Naive thymus-derived CD4-positive, alpha-beta T cell (primary cell): ENCODE measurements at regions of chr1 and their contacts with region 1.

Region 1: DNA sequence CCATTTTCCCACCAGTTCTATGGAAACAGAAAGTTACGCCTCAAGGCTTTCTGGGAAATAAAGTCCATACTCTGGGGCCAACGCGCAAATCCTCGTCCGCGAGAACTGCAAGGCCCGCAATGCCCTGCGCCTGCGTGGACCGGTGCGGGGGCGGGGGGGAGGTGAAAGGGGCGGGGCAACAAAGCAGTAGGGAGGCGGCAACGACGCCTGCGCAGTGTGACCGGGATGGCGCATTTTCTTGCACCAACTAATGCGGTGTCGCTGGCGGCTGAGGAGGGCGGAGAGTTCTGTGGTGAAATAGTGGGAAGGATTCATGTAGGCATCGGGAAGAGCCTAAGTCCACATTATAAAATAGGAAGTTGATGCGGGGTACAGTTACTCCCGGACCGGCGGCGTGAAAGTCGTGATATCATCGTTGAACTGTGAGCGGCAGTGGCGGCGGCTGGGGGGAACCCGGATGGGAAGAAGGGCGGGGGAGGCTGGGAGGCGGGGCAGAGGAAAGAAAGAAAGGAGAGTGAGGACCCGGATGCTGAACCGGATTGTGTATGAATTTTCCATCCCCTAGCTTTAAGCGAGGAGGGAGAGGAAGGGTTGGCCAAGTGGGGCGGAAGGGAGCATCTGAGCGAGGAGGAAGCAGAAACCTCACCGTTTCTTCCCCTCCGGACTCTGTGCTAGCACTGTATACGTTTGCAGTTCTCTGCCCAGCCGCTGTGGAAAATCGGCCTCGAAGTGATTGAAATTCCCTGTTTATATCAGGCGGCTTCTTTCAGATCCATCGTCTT is at the start of gene GGPS1:
- DNase-seq: peak; percentile 95 to 99 (median 97)
- ATAC-seq: peak; percentile 87
- H3K4me3 ChIP-seq: peak within 1 kb of the TSS; percentile 82
- H3K4me3 Mint-ChIP-seq: no peak within 1 kb of the TSS
- H3K27ac ChIP-seq: peak within 1 kb of the TSS; percentile 100
- H3K27ac Mint-ChIP-seq: peak within 1 kb of the TSS in 2 of 9 donors; percentile 91 to 94
- H3K4me1 ChIP-seq: peaks cover 40 to 54% of the 10 kb centered on the region in 2 donors
- H3K4me1 Mint-ChIP-seq: peaks cover 23 to 42% (median 31%) of the 10 kb centered on the region in 7 donors
- H3K27me3 ChIP-seq: no peaks in the 10 kb centered on the region
- H3K27me3 Mint-ChIP-seq: no peaks in the 10 kb centered on the region
- total RNA-seq, gene GGPS1: 26.5 to 51.7 (median 30.2) TPM

Region 2: DNA sequence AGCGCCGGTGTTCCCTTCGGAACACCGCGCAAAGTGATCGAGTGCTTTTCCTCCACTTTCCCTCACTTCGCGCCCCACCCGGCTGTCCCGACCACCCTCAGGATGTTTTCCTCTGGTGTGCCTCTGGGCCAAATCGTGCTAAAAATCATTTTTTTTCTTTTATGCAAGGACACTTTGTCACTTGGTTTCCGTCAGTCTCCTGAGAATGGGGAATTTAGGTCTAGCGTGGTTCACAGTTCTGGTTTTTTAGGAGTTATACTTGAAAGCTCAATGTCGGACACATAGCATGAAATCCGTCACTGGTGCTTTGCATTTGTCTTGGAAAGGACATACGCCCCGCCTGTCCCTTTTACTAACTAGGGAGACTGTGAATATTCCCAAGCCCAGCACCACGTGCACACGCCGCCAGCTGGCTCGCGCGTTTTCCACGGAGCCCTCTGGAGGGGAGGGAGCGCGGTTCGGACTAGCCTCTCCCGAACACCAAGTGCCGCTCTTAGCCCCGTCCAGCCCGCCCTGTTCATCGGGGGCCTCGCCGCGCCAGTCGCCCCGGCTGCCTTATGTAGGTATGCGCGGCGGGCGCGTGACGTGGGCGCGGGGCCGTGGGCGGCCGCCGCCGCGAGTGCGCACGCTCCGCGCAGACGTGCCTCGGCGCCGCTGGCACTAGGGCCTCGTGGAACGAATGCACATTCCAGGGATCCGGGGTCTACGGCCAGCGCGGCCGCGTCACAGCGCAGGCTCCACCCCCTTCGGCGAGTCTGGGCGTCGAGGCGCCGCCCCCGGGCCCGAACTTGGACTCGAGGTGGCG is 718.0 kb before region 1 on chr1:
- CTCF ChIA-PET with region 1: no interaction called
- POLR2A ChIA-PET with region 1: interaction called, 3 read pairs
- intact Hi-C with region 1: loop called (anchors 1 kb)
- DNase-seq: peak; percentile 89 to 93 (median 91)
- ATAC-seq: peak; percentile 67
- H3K4me3 ChIP-seq: peak overlapping the region; percentile 89
- H3K4me3 Mint-ChIP-seq: peak overlapping the region; percentile 80 to 98 (median 90)
- H3K27ac ChIP-seq: peak overlapping the region; percentile 97
- H3K27ac Mint-ChIP-seq: peak overlapping the region; percentile 97 to 100 (median 99)
- H3K4me1 ChIP-seq: peaks cover 34 to 43% of the 10 kb centered on the region in 2 donors
- H3K4me1 Mint-ChIP-seq: peaks cover 45 to 62% (median 54%) of the 10 kb centered on the region in 7 donors
- H3K27me3 ChIP-seq: no peaks in the 10 kb centered on the region
- H3K27me3 Mint-ChIP-seq: peaks cover 0 to 6% (median 0%) of the 10 kb centered on the region in 5 donors

Region 3: DNA sequence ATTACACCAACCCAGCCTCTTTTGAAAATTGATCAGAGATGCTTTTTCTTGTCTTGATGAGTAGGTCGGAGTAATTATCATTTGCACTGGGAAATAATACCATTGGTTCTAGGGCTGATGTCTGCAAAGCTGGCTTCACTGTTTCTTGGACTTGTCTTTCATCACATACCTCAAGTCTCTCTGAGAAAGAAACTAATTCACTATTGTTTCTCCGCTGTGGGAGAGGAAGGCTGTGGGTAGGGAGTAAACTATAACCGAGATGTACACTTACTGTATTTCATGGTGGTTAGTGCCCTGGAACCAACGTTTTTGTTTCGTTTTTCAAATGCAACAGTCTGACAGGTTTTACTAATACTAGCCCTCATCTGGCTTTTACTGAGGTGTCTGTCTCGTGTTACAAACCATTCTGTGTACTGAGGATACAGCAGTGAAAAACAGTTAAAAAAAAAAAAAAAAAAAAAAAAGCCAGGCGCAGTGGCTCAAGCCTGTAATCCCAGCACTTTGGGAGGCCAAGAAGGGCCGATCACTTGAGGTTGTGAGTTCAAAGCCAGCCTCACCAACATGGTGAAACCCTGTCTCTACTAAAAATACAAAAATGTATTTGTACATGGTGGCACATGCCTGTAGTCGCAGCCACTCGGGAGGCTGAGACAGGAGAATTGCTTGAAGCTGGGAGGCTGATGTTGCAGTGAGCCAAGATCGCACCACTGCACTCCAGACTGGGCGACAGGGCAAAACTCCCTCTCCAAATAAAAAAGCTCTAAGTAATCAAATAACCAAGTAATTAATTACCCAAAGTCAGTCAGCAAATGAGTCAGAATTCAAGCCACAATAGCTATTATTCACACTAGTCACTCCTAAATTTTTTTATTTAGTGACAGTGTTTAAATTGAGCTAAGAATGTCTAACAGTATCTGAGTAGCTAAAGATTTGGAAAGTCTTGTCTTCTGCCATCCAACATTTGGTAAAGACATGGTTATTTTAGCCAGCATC is 223.2 kb before region 1 on chr1:
- CTCF ChIA-PET with region 1: interaction called, 3 read pairs
- POLR2A ChIA-PET with region 1: interaction called, 3 read pairs
- intact Hi-C with region 1: loop called (anchors 2 to 5 kb)
- DNase-seq: peak in 1 of 9 donors; percentile 21
- ATAC-seq: peak; percentile 29
- H3K4me3 ChIP-seq: peak overlapping the region; percentile 55
- H3K4me3 Mint-ChIP-seq: peak overlapping the region in 9 of 10 donors; percentile 15 to 85 (median 77)
- H3K27ac ChIP-seq: no peak overlapping the region
- H3K27ac Mint-ChIP-seq: peak overlapping the region in 2 of 9 donors; percentile 54 to 76
- H3K4me1 ChIP-seq: peaks cover 21 to 23% of the 10 kb centered on the region in 2 donors
- H3K4me1 Mint-ChIP-seq: peaks cover 20 to 47% (median 41%) of the 10 kb centered on the region in 7 donors
- H3K27me3 ChIP-seq: no peaks in the 10 kb centered on the region
- H3K27me3 Mint-ChIP-seq: peaks cover 0 to 5% (median 0%) of the 10 kb centered on the region in 5 donors

Region 4: GRCh38 chr1:235215453-235215852 is 113.1 kb before region 1 on chr1:
- CTCF ChIA-PET with region 1: no interaction called
- POLR2A ChIA-PET with region 1: no interaction called
- intact Hi-C with region 1: no loop called
- DNase-seq: no peak
- ATAC-seq: no peak
- H3K4me3 ChIP-seq: no peak overlapping the region
- H3K4me3 Mint-ChIP-seq: no peak overlapping the region
- H3K27ac ChIP-seq: no peak overlapping the region
- H3K27ac Mint-ChIP-seq: peak overlapping the region in 4 of 9 donors; percentile 47 to 76 (median 64)
- H3K4me1 ChIP-seq: no peaks in the 10 kb centered on the region
- H3K4me1 Mint-ChIP-seq: peaks cover 7 to 43% (median 17%) of the 10 kb centered on the region in 7 donors
- H3K27me3 ChIP-seq: no peaks in the 10 kb centered on the region
- H3K27me3 Mint-ChIP-seq: no peaks in the 10 kb centered on the region

Region 5: DNA sequence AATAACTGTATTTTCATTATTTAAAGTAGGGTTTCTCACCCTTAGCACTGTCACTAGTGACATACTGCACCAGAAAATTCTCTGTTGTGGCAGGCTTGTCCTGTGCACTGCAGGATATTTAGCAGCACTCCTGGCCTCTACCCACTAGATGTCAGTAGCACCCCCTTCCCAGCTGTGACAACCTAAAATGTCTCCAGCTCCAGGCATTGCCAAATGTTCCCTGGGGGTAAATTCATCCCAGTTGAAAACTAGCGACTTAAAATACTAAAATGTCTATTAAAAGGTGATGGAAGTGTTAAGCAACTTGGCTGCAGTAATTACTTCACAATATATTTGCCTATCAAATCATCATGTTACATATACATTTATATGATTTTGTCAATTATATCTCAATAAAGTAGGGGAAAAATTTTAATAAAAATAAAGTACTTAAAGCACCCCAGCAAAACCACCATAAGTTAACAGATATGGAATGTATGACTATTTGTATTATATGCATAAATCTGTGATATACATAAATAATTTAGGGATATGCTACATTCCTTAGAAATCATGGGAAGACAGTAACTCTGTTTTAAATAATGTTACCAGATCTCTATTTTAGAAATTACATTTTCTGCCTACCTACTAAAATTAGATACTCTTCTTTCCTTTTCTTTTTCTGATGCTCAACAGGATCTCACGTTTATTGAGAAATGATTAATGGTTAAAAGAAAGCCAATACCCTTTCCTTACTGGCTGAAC is 75.2 kb before region 1 on chr1:
- CTCF ChIA-PET with region 1: no interaction called
- POLR2A ChIA-PET with region 1: interaction called, 3 read pairs
- intact Hi-C with region 1: loop called (anchors 1 kb)
- DNase-seq: peak; percentile 27 to 70 (median 63)
- ATAC-seq: peak; percentile 96
- H3K4me3 ChIP-seq: no peak overlapping the region
- H3K4me3 Mint-ChIP-seq: no peak overlapping the region
- H3K27ac ChIP-seq: no peak overlapping the region
- H3K27ac Mint-ChIP-seq: peak overlapping the region in 5 of 9 donors; percentile 16 to 65 (median 23)
- H3K4me1 ChIP-seq: peaks cover 0 to 5% of the 10 kb centered on the region in 2 donors
- H3K4me1 Mint-ChIP-seq: peaks cover 13 to 51% (median 41%) of the 10 kb centered on the region in 7 donors
- H3K27me3 ChIP-seq: no peaks in the 10 kb centered on the region
- H3K27me3 Mint-ChIP-seq: no peaks in the 10 kb centered on the region

Region 6: GRCh38 chr1:235367000-235367908 is 38.7 kb after region 1 on chr1 and contains the start of gene TBCE:
- CTCF ChIA-PET with region 1: no interaction called
- POLR2A ChIA-PET with region 1: interaction called, 6 read pairs
- intact Hi-C with region 1: loop called (anchors 1 kb)
- DNase-seq: peak; percentile 61 to 89 (median 63)
- ATAC-seq: peak; percentile 99
- H3K4me3 ChIP-seq: peak within 1 kb of the TSS; percentile 90
- H3K4me3 Mint-ChIP-seq: peak within 1 kb of the TSS; percentile 91 to 99 (median 98)
- H3K27ac ChIP-seq: peak within 1 kb of the TSS; percentile 74
- H3K27ac Mint-ChIP-seq: peak within 1 kb of the TSS; percentile 86 to 97 (median 93)
- H3K4me1 ChIP-seq: peaks cover 0 to 11% of the 10 kb centered on the region in 2 donors
- H3K4me1 Mint-ChIP-seq: peaks cover 13 to 41% (median 38%) of the 10 kb centered on the region in 7 donors
- H3K27me3 ChIP-seq: no peaks in the 10 kb centered on the region
- H3K27me3 Mint-ChIP-seq: no peaks in the 10 kb centered on the region
- total RNA-seq, gene TBCE: 16.8 to 26.1 (median 20.6) TPM

Region 7: GRCh38 chr1:235866913-235867845 is 538.6 kb after region 1 on chr1:
- CTCF ChIA-PET with region 1: no interaction called
- POLR2A ChIA-PET with region 1: no interaction called
- intact Hi-C with region 1: loop called (anchors 1 kb)
- DNase-seq: peak; percentile 97 to 100 (median 99)
- ATAC-seq: peak; percentile 85
- H3K4me3 ChIP-seq: peak overlapping the region; percentile 89
- H3K4me3 Mint-ChIP-seq: peak overlapping the region; percentile 84 to 99 (median 96)
- H3K27ac ChIP-seq: peak overlapping the region; percentile 99
- H3K27ac Mint-ChIP-seq: peak overlapping the region; percentile 93 to 100 (median 98)
- H3K4me1 ChIP-seq: peaks cover 25 to 31% of the 10 kb centered on the region in 2 donors
- H3K4me1 Mint-ChIP-seq: peaks cover 32 to 55% (median 51%) of the 10 kb centered on the region in 7 donors
- H3K27me3 ChIP-seq: no peaks in the 10 kb centered on the region
- H3K27me3 Mint-ChIP-seq: no peaks in the 10 kb centered on the region